ENCODE measurements at regions of chr11 and their contacts with region 1.

Region 1: GRCh38 chr11:20127671-20128527 is 32.4 kb downstream of the DBX1 start:
- DNase-seq: peak; percentile 74
- H3K4me3 Mint-ChIP-seq: no peak overlapping the region
- H3K27ac Mint-ChIP-seq: peak overlapping the region; percentile 23
- H3K4me1 Mint-ChIP-seq: peaks cover 25% of the 10 kb centered on the region
- H3K27me3 Mint-ChIP-seq: no peaks in the 10 kb centered on the region
- CTCF ChIP-seq: peak; percentile 81

Region 2: GRCh38 chr11:19553683-19554333 is 574.1 kb before region 1 on chr11:
- CTCF ChIA-PET with region 1: interaction called, 8 read pairs
- POLR2A ChIA-PET with region 1: no interaction called
- intact Hi-C with region 1: loop called (anchors 2 kb)
- DNase-seq: peak; percentile 85
- H3K4me3 Mint-ChIP-seq: no peak overlapping the region
- H3K27ac Mint-ChIP-seq: no peak overlapping the region
- H3K4me1 Mint-ChIP-seq: no peaks in the 10 kb centered on the region
- H3K27me3 Mint-ChIP-seq: peaks cover 52% of the 10 kb centered on the region
- CTCF ChIP-seq: peak; percentile 88

Region 3: GRCh38 chr11:19931141-19931770 is 196.6 kb before region 1 on chr11:
- CTCF ChIA-PET with region 1: interaction called, 79 read pairs
- POLR2A ChIA-PET with region 1: no interaction called
- intact Hi-C with region 1: no loop called
- DNase-seq: no peak
- H3K4me3 Mint-ChIP-seq: no peak overlapping the region
- H3K27ac Mint-ChIP-seq: no peak overlapping the region
- H3K4me1 Mint-ChIP-seq: peaks cover 10% of the 10 kb centered on the region
- H3K27me3 Mint-ChIP-seq: no peaks in the 10 kb centered on the region
- CTCF ChIP-seq: no peak

Region 4: GRCh38 chr11:20065406-20065805 is 62.5 kb before region 1 on chr11:
- CTCF ChIA-PET with region 1: interaction called, 11 read pairs
- POLR2A ChIA-PET with region 1: interaction called, 3 read pairs
- intact Hi-C with region 1: no loop called
- DNase-seq: no peak
- H3K4me3 Mint-ChIP-seq: no peak overlapping the region
- H3K27ac Mint-ChIP-seq: peak overlapping the region; percentile 12
- H3K4me1 Mint-ChIP-seq: peaks cover 19% of the 10 kb centered on the region
- H3K27me3 Mint-ChIP-seq: no peaks in the 10 kb centered on the region
- CTCF ChIP-seq: no peak

Region 5: GRCh38 chr11:20110908-20111669 is 16.8 kb before region 1 on chr11:
- CTCF ChIA-PET with region 1: interaction called, 115 read pairs
- POLR2A ChIA-PET with region 1: interaction called, 28 read pairs
- intact Hi-C with region 1: no loop called
- DNase-seq: peak; percentile 82
- H3K4me3 Mint-ChIP-seq: peak overlapping the region; percentile 57
- H3K27ac Mint-ChIP-seq: peak overlapping the region; percentile 64
- H3K4me1 Mint-ChIP-seq: peaks cover 50% of the 10 kb centered on the region
- H3K27me3 Mint-ChIP-seq: no peaks in the 10 kb centered on the region
- CTCF ChIP-seq: peak; percentile 89

Region 6: DNA sequence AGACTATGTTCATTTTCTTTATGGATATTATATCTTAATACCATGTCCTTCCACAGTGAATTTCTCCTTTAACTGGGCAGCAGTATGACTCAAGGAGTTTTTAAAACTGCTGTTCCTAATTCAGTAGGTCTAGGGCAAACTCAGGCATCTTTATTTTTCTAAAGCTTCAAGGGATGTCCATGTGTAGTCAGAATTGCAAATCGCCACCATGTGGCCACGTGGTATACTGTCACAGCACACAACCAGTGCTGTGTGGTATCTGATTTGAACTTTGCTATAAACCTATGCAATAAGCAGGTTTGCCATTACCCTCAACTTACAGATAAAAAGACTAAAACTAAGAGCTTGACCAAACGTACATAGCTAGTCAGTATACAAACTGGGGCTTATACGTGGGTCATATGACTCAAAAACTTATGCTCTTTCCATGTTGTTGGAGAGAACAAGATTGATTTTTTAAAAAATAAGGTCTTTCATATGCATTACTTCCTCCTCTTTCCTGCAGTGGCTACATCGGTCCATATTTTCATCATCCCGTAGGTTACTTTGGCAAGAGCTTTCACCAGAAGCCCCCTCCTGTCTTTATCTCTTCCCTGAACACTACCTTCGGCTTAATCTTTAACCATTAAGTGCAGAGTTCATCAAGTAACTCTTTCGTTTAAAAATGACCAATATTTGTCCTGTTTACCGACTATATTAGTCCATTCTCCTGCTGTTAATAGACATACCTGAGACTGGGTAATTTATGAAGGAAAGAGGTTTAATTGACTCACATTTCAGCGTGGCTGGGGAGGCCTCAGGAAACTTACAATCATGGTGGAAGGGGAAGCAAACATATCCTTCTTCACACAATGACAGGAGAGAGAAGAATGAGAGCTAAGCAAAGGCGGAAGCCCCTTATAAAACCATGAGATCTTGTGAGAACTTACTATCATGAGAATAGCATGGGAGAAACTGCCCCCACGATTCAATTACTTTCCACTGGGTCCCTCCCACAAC is 227.6 kb after region 1 on chr11:
- CTCF ChIA-PET with region 1: interaction called, 253 read pairs
- POLR2A ChIA-PET with region 1: interaction called, 3 read pairs
- intact Hi-C with region 1: loop called (anchors 1 kb)
- DNase-seq: peak; percentile 65
- H3K4me3 Mint-ChIP-seq: no peak overlapping the region
- H3K27ac Mint-ChIP-seq: no peak overlapping the region
- H3K4me1 Mint-ChIP-seq: peaks cover 17% of the 10 kb centered on the region
- H3K27me3 Mint-ChIP-seq: no peaks in the 10 kb centered on the region
- CTCF ChIP-seq: peak; percentile 69